ENCODE measurements at regions of chr18 and their contacts with region 1.

Region 1: GRCh38 chr18:41075212-41075611 is 879.8 kb upstream of the PIK3C3 start:
- DNase-seq: peak; percentile 94
- ATAC-seq: peak; percentile 81
- H3K4me3 ChIP-seq: no peak overlapping the region
- H3K27ac ChIP-seq: peak overlapping the region; percentile 88; the same call in 1 of the 2 replicates
- H3K4me1 ChIP-seq: peaks cover 9% of the 10 kb centered on the region
- H3K27me3 ChIP-seq: no peaks in the 10 kb centered on the region
- CTCF ChIP-seq: no peak
- POLR2A ChIP-seq: no peak
- RAD21 ChIP-seq: no peak

Region 2: DNA sequence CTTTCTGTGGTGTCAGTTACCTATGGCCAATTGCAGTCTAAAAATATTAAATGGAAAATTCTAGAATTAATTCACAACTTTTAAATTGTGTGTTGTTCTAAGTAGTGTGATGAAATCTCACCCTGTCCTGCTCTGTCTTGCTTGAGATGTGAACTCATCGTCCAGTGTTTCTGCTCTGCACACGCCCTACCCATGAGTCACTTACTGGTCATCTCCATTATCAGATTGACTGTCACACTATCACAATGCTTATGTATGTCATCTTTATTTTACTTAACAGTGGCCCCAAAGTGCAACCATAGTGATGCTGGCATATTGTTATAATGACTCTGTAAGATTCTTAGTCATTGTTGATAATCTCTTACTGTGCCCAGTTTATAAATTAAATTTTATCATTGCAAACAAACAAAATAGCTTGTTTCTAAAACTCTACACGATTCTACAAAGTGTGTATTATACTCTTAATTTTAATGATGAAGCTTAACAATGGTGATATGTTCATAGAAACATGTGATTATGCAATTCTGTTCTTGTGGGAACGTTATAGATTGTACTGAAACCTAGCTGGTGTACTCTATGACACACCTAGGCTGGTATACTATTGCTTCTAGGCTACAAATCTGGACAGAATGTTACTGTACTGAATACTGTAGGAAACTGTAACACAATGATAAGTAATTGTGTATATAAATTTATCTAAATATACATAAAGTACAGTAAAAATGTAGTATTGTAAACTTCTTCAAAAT is 206.9 kb before region 1 on chr18:
- CTCF ChIA-PET with region 1: no interaction called
- POLR2A ChIA-PET with region 1: no interaction called
- dilution Hi-C with region 1: no loop called
- in situ Hi-C with region 1: no loop called
- intact Hi-C with region 1: loop called (anchors 5 kb)
- DNase-seq: peak; percentile 96
- ATAC-seq: peak; percentile 90
- H3K4me3 ChIP-seq: no peak overlapping the region
- H3K27ac ChIP-seq: no peak overlapping the region
- H3K4me1 ChIP-seq: peaks cover 2% of the 10 kb centered on the region; the same call in 1 of the 2 replicates
- H3K27me3 ChIP-seq: no peaks in the 10 kb centered on the region
- CTCF ChIP-seq: no peak
- POLR2A ChIP-seq: no peak
- RAD21 ChIP-seq: no peak; the same call in 1 of the 2 replicates

Region 3: DNA sequence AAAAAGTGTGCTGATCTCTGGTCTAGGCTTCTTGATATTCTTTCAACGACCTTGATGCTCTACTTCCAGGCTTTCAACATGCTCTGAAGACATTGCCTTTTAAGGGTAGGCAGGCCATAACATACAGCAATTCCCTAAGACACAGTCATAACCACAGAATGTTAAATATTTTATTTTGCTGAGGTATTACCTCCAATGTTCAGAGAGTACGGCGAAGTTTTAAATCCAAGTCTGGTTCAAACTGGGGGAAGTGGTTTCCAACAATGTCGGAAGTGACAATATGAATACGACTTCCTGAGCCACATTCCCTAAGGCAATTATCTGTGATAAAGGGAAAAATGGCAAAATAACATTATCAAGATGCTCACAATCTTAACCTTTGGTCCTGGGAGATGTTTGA is 198.1 kb before region 1 on chr18:
- CTCF ChIA-PET with region 1: no interaction called
- POLR2A ChIA-PET with region 1: no interaction called
- dilution Hi-C with region 1: no loop called
- in situ Hi-C with region 1: no loop called
- intact Hi-C with region 1: loop called (anchors 1 kb)
- DNase-seq: peak; percentile 97
- ATAC-seq: peak; percentile 95
- H3K4me3 ChIP-seq: no peak overlapping the region
- H3K27ac ChIP-seq: peak overlapping the region; percentile 75
- H3K4me1 ChIP-seq: peaks cover 12% of the 10 kb centered on the region
- H3K27me3 ChIP-seq: no peaks in the 10 kb centered on the region
- CTCF ChIP-seq: no peak
- POLR2A ChIP-seq: no peak
- RAD21 ChIP-seq: no peak; the same call in 1 of the 2 replicates

Region 4: DNA sequence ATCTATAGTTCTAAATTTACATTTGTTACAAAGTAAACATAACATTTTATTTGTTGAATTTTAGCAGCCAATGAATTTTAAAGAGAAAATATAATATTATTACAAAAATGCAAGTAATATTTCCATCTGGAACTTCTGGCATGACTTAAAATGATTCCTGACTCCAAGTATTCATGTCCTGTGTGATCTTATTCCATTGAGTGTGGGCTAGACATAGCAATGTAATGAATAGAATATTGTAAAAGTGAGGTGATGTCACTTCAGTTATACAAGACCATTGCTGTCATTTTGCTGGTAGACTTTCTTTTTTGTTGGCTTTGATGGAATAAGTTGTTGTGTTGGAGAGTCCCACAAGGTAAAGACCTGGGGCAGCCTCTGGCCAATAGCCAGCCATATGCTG is 32.3 kb before region 1 on chr18:
- CTCF ChIA-PET with region 1: no interaction called
- POLR2A ChIA-PET with region 1: no interaction called
- dilution Hi-C with region 1: no loop called
- in situ Hi-C with region 1: no loop called
- intact Hi-C with region 1: no loop called
- DNase-seq: peak; percentile 28
- ATAC-seq: no peak
- H3K4me3 ChIP-seq: no peak overlapping the region
- H3K27ac ChIP-seq: no peak overlapping the region
- H3K4me1 ChIP-seq: no peaks in the 10 kb centered on the region
- H3K27me3 ChIP-seq: no peaks in the 10 kb centered on the region
- CTCF ChIP-seq: no peak
- POLR2A ChIP-seq: no peak
- RAD21 ChIP-seq: no peak

Region 5: GRCh38 chr18:41121116-41121826 is 46.1 kb after region 1 on chr18:
- CTCF ChIA-PET with region 1: no interaction called
- POLR2A ChIA-PET with region 1: no interaction called
- dilution Hi-C with region 1: no loop called
- in situ Hi-C with region 1: no loop called
- intact Hi-C with region 1: loop called (anchors 10 kb)
- DNase-seq: peak; percentile 84
- ATAC-seq: peak; percentile 89
- H3K4me3 ChIP-seq: no peak overlapping the region
- H3K27ac ChIP-seq: peak overlapping the region; percentile 29; the same call in 1 of the 2 replicates
- H3K4me1 ChIP-seq: peaks cover 3% of the 10 kb centered on the region; the same call in 1 of the 2 replicates
- H3K27me3 ChIP-seq: no peaks in the 10 kb centered on the region
- CTCF ChIP-seq: no peak
- POLR2A ChIP-seq: no peak
- RAD21 ChIP-seq: no peak

Region 6: GRCh38 chr18:41231681-41232080 is 156.5 kb after region 1 on chr18:
- CTCF ChIA-PET with region 1: no interaction called
- POLR2A ChIA-PET with region 1: no interaction called
- dilution Hi-C with region 1: no loop called
- in situ Hi-C with region 1: no loop called
- intact Hi-C with region 1: loop called (anchors 10 kb)
- DNase-seq: no peak
- ATAC-seq: no peak
- H3K4me3 ChIP-seq: no peak overlapping the region
- H3K27ac ChIP-seq: no peak overlapping the region
- H3K4me1 ChIP-seq: no peaks in the 10 kb centered on the region
- H3K27me3 ChIP-seq: no peaks in the 10 kb centered on the region
- CTCF ChIP-seq: no peak
- POLR2A ChIP-seq: no peak
- RAD21 ChIP-seq: no peak

Region 7: DNA sequence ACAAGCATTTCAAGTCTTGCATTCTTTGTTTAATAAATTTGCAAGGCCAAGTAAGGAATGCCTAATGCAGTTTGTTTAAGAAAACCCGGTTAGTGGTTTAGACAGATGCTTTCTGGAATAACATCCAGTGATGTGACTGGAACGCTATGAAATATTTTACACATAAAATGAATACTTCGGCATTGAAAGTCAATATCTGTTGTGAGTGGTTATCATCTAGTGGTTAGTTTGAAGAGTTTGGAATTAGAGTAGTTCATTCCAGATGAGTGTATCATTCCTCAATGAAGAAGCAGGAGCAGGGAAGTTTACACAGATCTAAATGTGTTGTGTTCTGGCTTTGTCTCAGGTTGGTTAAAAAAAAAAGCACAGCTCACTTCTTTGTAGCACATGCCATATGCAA is 271.8 kb after region 1 on chr18:
- CTCF ChIA-PET with region 1: no interaction called
- POLR2A ChIA-PET with region 1: no interaction called
- dilution Hi-C with region 1: no loop called
- in situ Hi-C with region 1: no loop called
- intact Hi-C with region 1: loop called (anchors 1 kb)
- DNase-seq: peak; percentile 94
- ATAC-seq: peak; percentile 96
- H3K4me3 ChIP-seq: no peak overlapping the region
- H3K27ac ChIP-seq: peak overlapping the region; percentile 15; the same call in 1 of the 2 replicates
- H3K4me1 ChIP-seq: peaks cover 2% of the 10 kb centered on the region; the same call in 1 of the 2 replicates
- H3K27me3 ChIP-seq: no peaks in the 10 kb centered on the region; the same call in 1 of the 2 replicates
- CTCF ChIP-seq: no peak
- POLR2A ChIP-seq: no peak
- RAD21 ChIP-seq: no peak

Region 8: DNA sequence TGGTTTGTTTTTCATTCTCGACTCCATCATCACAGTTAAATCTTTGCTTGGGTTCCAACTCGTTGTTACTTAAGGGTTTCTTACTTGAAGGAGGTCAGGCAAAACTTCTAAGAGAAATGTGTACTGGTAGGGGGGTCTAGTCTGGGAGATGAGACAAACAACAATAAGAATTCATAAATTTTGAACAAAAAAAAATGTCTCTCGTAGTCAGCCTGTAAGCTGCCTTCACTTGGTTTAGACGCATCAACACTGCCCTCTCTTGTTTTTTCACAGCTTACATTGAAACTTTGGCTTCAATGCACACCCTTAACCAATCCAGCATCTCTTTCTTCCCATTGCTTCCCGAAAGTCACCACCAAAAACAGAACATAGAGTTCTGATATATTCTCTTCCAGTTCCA is 303.4 kb after region 1 on chr18:
- CTCF ChIA-PET with region 1: no interaction called
- POLR2A ChIA-PET with region 1: no interaction called
- dilution Hi-C with region 1: no loop called
- in situ Hi-C with region 1: no loop called
- intact Hi-C with region 1: loop called (anchors 10 kb)
- DNase-seq: peak; percentile 70
- ATAC-seq: peak; percentile 97
- H3K4me3 ChIP-seq: no peak overlapping the region
- H3K27ac ChIP-seq: no peak overlapping the region
- H3K4me1 ChIP-seq: no peaks in the 10 kb centered on the region
- H3K27me3 ChIP-seq: no peaks in the 10 kb centered on the region; the same call in 1 of the 2 replicates
- CTCF ChIP-seq: peak; percentile 69
- POLR2A ChIP-seq: no peak
- RAD21 ChIP-seq: peak; percentile 82

Region 9: DNA sequence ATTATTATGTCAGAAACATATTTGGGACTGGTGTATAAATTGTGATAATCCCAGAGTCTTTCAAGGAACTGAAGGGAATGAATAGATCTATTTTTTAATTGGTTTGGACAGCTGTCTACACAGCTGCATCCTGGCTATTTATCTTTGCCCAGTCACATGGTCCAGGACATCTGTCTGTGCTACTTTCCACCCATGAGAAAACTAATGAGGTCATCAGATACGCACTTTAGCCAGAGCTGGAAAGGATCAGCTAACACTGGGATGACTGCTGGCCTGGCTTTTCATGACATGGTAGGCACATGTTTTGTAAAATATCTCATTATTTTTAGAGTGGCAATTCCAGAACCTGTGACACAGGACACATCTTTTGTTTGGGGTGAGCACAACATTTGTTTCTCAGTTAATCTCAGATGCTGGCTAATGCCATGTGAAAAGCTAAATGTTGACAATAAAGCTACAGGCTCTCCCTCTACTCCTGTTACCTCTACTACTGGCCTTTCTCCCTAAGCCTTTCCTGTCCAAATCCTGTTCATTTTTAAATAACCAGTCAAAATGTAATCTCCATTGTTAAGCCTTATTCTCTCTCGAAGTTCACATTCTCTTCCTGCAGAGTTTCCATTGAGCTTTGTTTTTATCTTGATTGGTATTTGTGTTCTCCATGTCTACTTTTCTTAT is 1539.5 kb after region 1 on chr18:
- CTCF ChIA-PET with region 1: no interaction called
- POLR2A ChIA-PET with region 1: no interaction called
- dilution Hi-C with region 1: no loop called
- in situ Hi-C with region 1: no loop called
- intact Hi-C with region 1: no loop called
- DNase-seq: no peak
- ATAC-seq: no peak
- H3K4me3 ChIP-seq: no peak overlapping the region
- H3K27ac ChIP-seq: no peak overlapping the region
- H3K4me1 ChIP-seq: no peaks in the 10 kb centered on the region
- H3K27me3 ChIP-seq: no peaks in the 10 kb centered on the region
- CTCF ChIP-seq: no peak
- POLR2A ChIP-seq: no peak
- RAD21 ChIP-seq: no peak